SK-N-SH (cell line): ENCODE measurements at regions of chr9 and their contacts with region 1.

Region 1: DNA sequence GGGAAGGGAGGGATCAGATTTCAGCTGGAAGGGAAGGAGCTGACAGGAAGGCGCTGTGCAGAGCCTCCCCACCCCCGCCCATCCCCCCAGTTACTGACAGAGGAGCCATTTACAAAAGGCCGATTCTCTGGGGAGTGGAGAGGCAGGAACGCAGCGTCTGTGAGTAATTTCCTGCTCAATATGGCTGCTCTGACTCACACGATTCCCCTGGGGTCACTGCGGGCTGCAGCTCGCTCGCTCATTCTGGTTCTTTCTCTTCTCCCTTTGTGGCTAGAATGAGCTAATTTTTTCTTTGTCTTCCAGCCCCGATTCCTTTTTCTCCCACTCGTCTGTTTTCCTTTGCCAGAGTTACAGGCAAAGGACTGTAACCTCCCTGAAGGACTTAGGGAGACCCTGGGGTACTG is 28.8 kb downstream of the PTPA start:
- DNase-seq: peak; percentile 75
- H3K4me3 ChIP-seq: peak overlapping the region; percentile 50 to 53
- H3K27ac ChIP-seq: peak overlapping the region; percentile 99 to 100
- H3K4me1 ChIP-seq: peaks cover 43 to 55% of the 10 kb centered on the region in 2 experiments; a peak in 3 of 4 replicates
- H3K27me3 ChIP-seq: no peaks in the 10 kb centered on the region
- CTCF ChIP-seq: no peak
- EP300 ChIP-seq: peak; percentile 61 to 96
- RAD21 ChIP-seq: peak; percentile 29

Region 2: GRCh38 chr9:128656416-128657343 is 483.3 kb before region 1 on chr9 and contains the start of gene DYNC2I2:
- CTCF ChIA-PET with region 1: no interaction called
- POLR2A ChIA-PET with region 1: no interaction called
- DNase-seq: peak; percentile 98
- H3K4me3 ChIP-seq: peak within 1 kb of the TSS; percentile 59 to 69
- H3K27ac ChIP-seq: peak within 1 kb of the TSS; percentile 94 to 98
- H3K4me1 ChIP-seq: no peaks in the 10 kb centered on the region
- H3K27me3 ChIP-seq: no peaks in the 10 kb centered on the region
- CTCF ChIP-seq: no peak
- EP300 ChIP-seq: no peak
- RAD21 ChIP-seq: no peak
- polyA plus RNA-seq, gene DYNC2I2: 57.2 and 73.7 TPM in 2 replicates

Region 3: GRCh38 chr9:128689820-128690692 is 449.9 kb before region 1 on chr9:
- CTCF ChIA-PET with region 1: no interaction called
- POLR2A ChIA-PET with region 1: no interaction called
- DNase-seq: peak; percentile 93
- H3K4me3 ChIP-seq: peak overlapping the region; percentile 76 to 97
- H3K27ac ChIP-seq: peak overlapping the region; percentile 57 to 93
- H3K4me1 ChIP-seq: peaks cover 3 to 6% of the 10 kb centered on the region in 2 experiments; a peak in 2 of 4 replicates
- H3K27me3 ChIP-seq: no peaks in the 10 kb centered on the region
- CTCF ChIP-seq: no peak
- EP300 ChIP-seq: no peak
- RAD21 ChIP-seq: no peak

Region 4: GRCh38 chr9:129110740-129111527 is 29.1 kb before region 1 on chr9 and contains the starts of genes CRAT and PTPA:
- CTCF ChIA-PET with region 1: interaction called, 12 read pairs
- POLR2A ChIA-PET with region 1: no interaction called
- DNase-seq: peak; percentile 100
- H3K4me3 ChIP-seq: peak within 1 kb of the TSS; percentile 88 to 91
- H3K27ac ChIP-seq: peak within 1 kb of the TSS; percentile 97
- H3K4me1 ChIP-seq: peaks cover 11 to 19% of the 10 kb centered on the region in 2 experiments; a peak in 2 of 4 replicates
- H3K27me3 ChIP-seq: no peaks in the 10 kb centered on the region
- CTCF ChIP-seq: no peak
- EP300 ChIP-seq: 0 out of 4 replicates have a peak, but pooled peaks of 1 of the 2 experiments have one; percentile 17
- RAD21 ChIP-seq: no peak
- polyA plus RNA-seq, gene CRAT: 29.7 and 44.5 TPM in 2 replicates
- polyA plus RNA-seq, gene PTPA: 130 and 149 TPM in 2 replicates

Region 5: GRCh38 chr9:129154866-129155477 is 15.0 kb after region 1 on chr9:
- CTCF ChIA-PET with region 1: interaction called, 42 read pairs
- POLR2A ChIA-PET with region 1: no interaction called
- DNase-seq: no peak
- H3K4me3 ChIP-seq: no peak overlapping the region
- H3K27ac ChIP-seq: no peak overlapping the region
- H3K4me1 ChIP-seq: no peaks in the 10 kb centered on the region
- H3K27me3 ChIP-seq: no peaks in the 10 kb centered on the region
- CTCF ChIP-seq: no peak
- EP300 ChIP-seq: no peak
- RAD21 ChIP-seq: no peak

Region 6: DNA sequence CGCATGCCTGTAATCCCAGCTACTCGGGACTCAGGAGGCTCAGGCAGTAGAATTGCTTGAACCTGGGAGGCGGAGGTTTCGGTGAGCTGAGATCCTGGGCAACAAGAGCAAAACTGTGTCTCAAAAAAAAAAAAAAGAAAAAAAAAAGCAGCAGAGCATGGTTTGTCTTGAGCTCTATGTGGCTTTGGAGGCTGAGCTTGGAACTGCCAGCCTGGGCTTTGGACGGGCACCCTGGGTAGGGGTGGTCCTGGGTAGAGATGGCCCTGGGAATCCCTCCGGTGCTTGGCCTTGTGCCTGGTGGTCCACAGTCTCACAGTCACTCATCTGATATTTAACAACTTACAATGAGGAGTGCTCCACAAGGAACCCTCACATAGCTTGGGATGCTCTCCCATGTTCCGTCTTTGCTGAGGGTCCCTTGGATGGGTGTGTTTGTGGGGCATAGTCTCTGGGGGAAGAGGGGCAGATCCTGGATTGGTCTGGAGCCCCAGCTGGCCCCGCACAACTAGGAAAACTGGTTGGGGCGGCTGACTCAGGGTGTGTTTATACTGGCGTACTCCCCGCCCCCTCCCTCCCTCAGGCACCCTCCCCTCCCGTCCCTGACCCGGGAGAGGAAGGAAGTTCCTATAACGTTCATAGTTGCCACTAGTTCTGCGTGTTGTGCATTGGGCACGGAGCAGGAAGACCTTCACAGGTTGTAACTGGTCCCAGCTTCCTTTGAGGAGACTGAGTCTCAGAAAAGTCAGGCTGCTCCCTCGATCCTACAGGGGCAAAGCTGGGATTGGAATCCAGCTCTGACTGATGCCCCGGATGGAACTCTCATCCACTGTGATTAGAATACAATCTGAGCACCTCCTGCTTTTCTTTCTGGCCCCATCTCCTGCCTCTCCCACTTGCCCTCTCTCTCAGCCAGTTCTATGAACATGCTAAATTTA is 26.9 kb after region 1 on chr9:
- CTCF ChIA-PET with region 1: interaction called, 193 read pairs
- POLR2A ChIA-PET with region 1: interaction called, 4 read pairs
- DNase-seq: no peak
- H3K4me3 ChIP-seq: no peak overlapping the region
- H3K27ac ChIP-seq: peak overlapping the region; percentile 6 to 80; a peak in 2 of 4 replicates
- H3K4me1 ChIP-seq: peaks cover 0 to 15% of the 10 kb centered on the region in 2 experiments; a peak in 3 of 4 replicates
- H3K27me3 ChIP-seq: no peaks in the 10 kb centered on the region
- CTCF ChIP-seq: no peak
- EP300 ChIP-seq: no peak
- RAD21 ChIP-seq: no peak

Region 7: DNA sequence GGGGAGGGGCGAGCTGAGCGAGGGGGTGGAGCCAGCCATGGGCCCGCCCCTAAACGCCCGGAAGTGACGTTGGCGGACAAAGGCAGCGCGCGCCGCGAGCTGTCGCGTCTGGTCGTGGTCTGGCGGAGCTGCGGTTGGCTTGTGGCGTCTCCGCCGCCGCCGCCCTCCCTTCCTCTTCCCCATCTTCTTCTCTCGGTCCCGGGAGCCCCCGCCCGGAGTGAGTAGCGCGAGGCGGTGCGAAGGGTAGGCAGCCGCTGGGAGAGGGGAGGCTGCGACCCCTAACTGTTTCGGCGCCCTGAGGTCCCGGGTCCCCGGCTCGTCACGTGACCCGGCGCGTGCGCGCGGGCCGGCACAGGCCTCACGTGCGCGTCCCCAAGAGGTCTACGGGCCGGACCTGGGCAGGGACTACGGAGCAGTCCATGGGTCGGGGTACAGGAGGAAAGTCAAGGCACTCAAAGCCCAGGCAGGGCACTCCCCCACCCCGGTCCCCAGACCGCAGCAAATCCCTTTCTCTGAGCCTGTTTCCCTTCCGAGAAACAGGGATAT is 486.2 kb after region 1 on chr9 and contains the start of gene NTMT1:
- CTCF ChIA-PET with region 1: interaction called, 212 read pairs
- POLR2A ChIA-PET with region 1: interaction called, 6 read pairs
- DNase-seq: peak; percentile 95
- H3K4me3 ChIP-seq: peak within 1 kb of the TSS; percentile 87 to 92
- H3K27ac ChIP-seq: peak within 1 kb of the TSS; percentile 78 to 83
- H3K4me1 ChIP-seq: peaks cover 16 to 29% of the 10 kb centered on the region in 2 experiments; a peak in 2 of 4 replicates
- H3K27me3 ChIP-seq: no peaks in the 10 kb centered on the region
- CTCF ChIP-seq: no peak
- EP300 ChIP-seq: no peak
- RAD21 ChIP-seq: no peak
- polyA plus RNA-seq, gene NTMT1: 75.0 and 78.3 TPM in 2 replicates